Endothelial cell of umbilical vein (primary cell): ENCODE measurements at regions of chr11 and their contacts with region 1.

Region 1: DNA sequence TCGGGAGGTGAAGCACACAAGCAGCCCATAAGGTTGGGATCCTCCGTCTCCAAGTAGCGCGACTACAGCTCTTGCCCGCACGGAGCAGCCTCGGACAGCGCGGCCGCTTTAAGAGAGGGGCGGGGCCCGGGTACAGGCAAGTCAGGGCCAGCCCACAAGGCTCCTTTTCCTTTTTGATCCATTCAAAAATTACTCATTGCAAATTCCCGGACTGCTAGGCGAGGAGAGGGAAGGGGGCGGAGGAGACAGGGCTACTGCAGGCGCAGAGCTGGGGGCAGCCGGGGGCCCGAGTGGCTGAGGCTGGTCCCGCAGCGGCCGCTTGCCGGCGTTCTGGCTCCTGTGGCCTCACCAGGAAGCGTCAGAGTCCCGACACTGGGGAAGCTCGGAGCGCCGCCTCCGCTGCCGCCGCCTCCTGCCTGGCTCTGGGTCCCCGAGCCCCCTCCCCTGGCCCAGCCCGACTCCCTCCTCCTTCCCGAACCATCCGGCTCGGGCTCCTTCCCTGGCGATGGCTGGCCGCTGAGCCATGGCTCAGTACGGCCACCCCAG is at the start of gene UBASH3B:
- DNase-seq: peak; percentile 90
- H3K4me3 ChIP-seq: peak within 1 kb of the TSS; percentile 47 to 74 (median 62)
- H3K27ac ChIP-seq: peak within 1 kb of the TSS; percentile 83
- H3K4me1 ChIP-seq: peaks cover 17% of the 10 kb centered on the region
- H3K27me3 ChIP-seq: no peaks in the 10 kb centered on the region
- CTCF ChIP-seq: no peak
- POLR2A ChIP-seq: peak; percentile 96
- total RNA-seq, gene UBASH3B: 38.1 and 38.8 TPM in 2 replicates

Region 2: DNA sequence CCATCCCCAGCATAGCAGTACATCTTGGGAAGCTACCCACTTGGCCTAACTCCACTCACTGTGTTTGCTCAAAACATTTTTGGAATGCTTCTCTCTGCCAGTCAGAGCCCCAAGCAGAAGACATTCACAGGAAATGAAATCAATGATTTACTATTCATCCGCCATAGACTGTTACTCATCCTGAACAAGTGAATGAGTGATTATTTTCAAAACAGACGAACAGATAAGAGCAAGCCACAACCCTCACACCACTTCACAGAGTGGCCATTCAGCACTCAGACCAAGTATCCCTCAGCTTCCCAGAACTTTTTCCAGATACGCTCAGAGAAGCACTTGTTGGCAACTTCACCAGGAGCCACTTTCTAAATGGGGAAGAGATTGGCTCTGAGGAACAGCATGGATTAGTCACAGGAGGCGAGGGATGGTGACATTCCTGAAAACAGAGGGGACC is 13.1 kb before region 1 on chr11:
- CTCF ChIA-PET with region 1: interaction called, 12 read pairs
- POLR2A ChIA-PET with region 1: interaction called, 3 read pairs
- dilution Hi-C with region 1: no loop called
- intact Hi-C with region 1: loop called (anchors 1 kb)
- DNase-seq: peak; percentile 60
- H3K4me3 ChIP-seq: no peak overlapping the region
- H3K27ac ChIP-seq: peak overlapping the region; percentile 69
- H3K4me1 ChIP-seq: peaks cover 26% of the 10 kb centered on the region
- H3K27me3 ChIP-seq: no peaks in the 10 kb centered on the region
- CTCF ChIP-seq: no peak
- POLR2A ChIP-seq: peak; percentile 25

Region 3: GRCh38 chr11:122668562-122669090 is 13.0 kb after region 1 on chr11:
- CTCF ChIA-PET with region 1: interaction called, 11 read pairs
- POLR2A ChIA-PET with region 1: no interaction called
- dilution Hi-C with region 1: no loop called
- intact Hi-C with region 1: no loop called
- DNase-seq: peak; percentile 20
- H3K4me3 ChIP-seq: no peak overlapping the region
- H3K27ac ChIP-seq: no peak overlapping the region
- H3K4me1 ChIP-seq: peaks cover 6% of the 10 kb centered on the region
- H3K27me3 ChIP-seq: no peaks in the 10 kb centered on the region
- CTCF ChIP-seq: no peak
- POLR2A ChIP-seq: no peak

Region 4: DNA sequence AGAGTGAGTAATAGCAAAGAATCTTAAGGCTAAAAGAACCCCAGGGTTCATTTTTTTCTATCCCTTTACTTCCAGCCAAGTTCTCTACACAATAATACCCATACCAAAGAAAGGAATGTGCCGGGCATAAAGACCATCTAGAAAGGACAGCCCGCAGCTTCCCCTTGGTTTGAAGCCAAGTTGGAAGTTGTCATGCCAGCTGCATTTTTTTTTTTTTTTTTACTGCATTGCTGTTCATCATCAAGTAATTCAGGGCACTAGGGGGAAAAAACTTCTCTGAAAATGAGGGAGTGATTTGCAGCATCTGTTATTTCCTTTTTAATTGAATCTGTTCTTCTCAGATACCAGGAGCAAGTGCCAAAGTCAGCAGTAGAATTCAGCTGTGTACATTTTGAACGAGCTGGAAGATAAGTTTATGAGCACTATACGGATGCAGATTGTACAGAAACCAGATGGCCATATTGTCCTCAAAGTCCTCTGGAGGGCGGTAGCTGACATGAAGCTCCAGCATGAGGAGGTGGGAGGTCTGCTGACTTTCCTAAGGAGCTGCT is 56.3 kb after region 1 on chr11:
- CTCF ChIA-PET with region 1: interaction called, 26 read pairs
- POLR2A ChIA-PET with region 1: interaction called, 5 read pairs
- dilution Hi-C with region 1: no loop called
- intact Hi-C with region 1: loop called (anchors 1 kb)
- DNase-seq: peak; percentile 98
- H3K4me3 ChIP-seq: no peak overlapping the region
- H3K27ac ChIP-seq: peak overlapping the region; percentile 48
- H3K4me1 ChIP-seq: peaks cover 35% of the 10 kb centered on the region
- H3K27me3 ChIP-seq: no peaks in the 10 kb centered on the region
- CTCF ChIP-seq: peak; percentile 37 to 42
- POLR2A ChIP-seq: peak; percentile 61

Region 5: DNA sequence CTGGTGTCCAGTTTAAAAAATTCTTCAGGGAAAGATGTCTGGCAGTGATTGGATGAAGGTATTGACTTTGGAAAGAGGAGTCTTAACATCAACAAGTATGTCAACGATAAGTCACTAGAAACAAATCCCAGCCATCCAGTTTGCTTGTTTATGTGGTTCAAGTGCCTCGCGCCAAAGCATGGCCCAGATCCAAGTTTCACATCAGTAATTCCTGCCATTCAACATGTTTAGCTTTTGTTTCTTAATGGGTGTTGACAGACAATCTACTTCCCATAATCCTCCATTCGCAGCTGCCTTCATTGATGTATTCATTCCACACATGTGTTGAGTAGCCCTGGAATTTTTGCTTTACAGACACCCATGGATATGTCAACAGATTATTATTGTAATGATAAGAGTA is 77.7 kb after region 1 on chr11:
- CTCF ChIA-PET with region 1: interaction called, 4 read pairs
- POLR2A ChIA-PET with region 1: no interaction called
- dilution Hi-C with region 1: no loop called
- intact Hi-C with region 1: loop called (anchors 2 kb)
- DNase-seq: peak; percentile 99
- H3K4me3 ChIP-seq: no peak overlapping the region
- H3K27ac ChIP-seq: peak overlapping the region; percentile 69
- H3K4me1 ChIP-seq: peaks cover 59% of the 10 kb centered on the region
- H3K27me3 ChIP-seq: no peaks in the 10 kb centered on the region
- CTCF ChIP-seq: no peak
- POLR2A ChIP-seq: peak; percentile 20

Region 6: DNA sequence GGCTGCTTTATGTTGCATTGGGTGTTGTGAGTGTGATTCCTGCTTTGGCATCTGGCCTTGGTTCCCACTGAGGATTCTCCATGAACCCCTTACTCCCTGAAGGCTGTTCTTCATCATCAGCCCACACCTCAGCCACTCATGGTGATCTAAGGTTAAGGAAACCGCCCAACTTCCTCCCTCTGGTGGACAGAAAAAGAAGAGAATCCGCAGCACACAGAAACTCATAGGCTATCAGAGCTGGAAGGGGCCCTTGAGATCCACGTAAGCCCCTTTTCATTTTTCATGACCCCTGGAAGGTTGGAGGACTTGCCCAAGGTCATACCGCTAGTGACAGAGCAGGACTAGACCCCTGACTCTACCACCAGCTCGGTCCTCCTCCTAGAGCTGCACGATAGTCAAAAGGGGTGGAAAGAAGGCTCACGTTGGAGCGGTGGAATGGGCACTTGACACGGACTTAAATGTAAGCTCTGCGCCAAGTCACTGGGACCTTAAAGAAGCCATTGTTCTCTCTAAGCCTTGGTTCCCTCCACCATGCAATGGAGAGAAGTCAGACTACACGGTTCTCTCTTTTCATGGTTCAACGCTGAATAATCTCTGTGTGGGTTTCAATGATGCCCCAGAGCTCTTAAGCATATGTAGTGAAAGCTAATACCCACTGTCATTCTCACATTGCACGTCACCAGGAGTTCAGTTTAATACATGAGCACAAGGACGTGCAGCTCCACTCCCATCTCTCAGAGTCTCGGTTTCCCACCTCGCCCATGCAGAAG is 99.1 kb after region 1 on chr11:
- CTCF ChIA-PET with region 1: interaction called, 15 read pairs
- POLR2A ChIA-PET with region 1: no interaction called
- dilution Hi-C with region 1: no loop called
- intact Hi-C with region 1: loop called (anchors 1 kb)
- DNase-seq: no peak
- H3K4me3 ChIP-seq: no peak overlapping the region
- H3K27ac ChIP-seq: no peak overlapping the region
- H3K4me1 ChIP-seq: peaks cover 33% of the 10 kb centered on the region
- H3K27me3 ChIP-seq: no peaks in the 10 kb centered on the region
- CTCF ChIP-seq: peak; percentile 36 to 37
- POLR2A ChIP-seq: no peak

Region 7: DNA sequence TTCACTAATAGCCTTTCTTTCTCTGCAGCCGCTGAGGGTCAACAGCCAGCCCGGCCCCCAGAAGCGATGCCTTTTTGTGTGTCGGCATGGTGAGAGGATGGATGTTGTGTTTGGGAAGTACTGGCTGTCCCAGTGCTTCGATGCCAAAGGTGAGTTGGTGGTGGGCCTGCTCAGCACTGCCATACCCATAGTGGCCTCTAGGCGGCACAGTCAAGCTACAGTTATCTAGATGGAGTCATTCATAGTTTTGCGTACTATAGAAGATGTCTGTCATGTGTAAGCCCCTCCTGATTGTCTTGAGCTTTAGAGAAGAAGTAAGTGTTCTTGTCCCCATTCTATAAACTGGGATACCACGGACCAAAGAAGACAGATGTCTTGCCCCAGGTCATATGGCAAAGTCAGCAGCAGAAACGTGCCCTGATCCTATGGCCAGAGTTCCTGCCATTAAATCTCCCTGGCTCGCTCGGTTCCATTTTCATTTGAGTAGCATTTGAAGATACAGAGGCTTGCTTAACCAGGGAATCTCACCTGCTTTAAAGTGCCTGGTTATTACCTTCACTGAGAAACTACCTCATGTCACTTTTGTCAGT is 140.6 kb after region 1 on chr11:
- CTCF ChIA-PET with region 1: interaction called, 11 read pairs
- POLR2A ChIA-PET with region 1: no interaction called
- dilution Hi-C with region 1: no loop called
- intact Hi-C with region 1: no loop called
- DNase-seq: peak; percentile 42
- H3K4me3 ChIP-seq: no peak overlapping the region
- H3K27ac ChIP-seq: no peak overlapping the region
- H3K4me1 ChIP-seq: peaks cover 7% of the 10 kb centered on the region
- H3K27me3 ChIP-seq: no peaks in the 10 kb centered on the region
- CTCF ChIP-seq: peak; percentile 78 to 81
- POLR2A ChIP-seq: no peak

Region 8: GRCh38 chr11:122910775-122911174 is 255.2 kb after region 1 on chr11:
- CTCF ChIA-PET with region 1: no interaction called
- POLR2A ChIA-PET with region 1: no interaction called
- dilution Hi-C with region 1: no loop called
- intact Hi-C with region 1: no loop called
- DNase-seq: peak; percentile 36
- H3K4me3 ChIP-seq: no peak overlapping the region
- H3K27ac ChIP-seq: no peak overlapping the region
- H3K4me1 ChIP-seq: peaks cover 3% of the 10 kb centered on the region
- H3K27me3 ChIP-seq: no peaks in the 10 kb centered on the region
- CTCF ChIP-seq: peak in 1 of 2 donors; percentile 8
- POLR2A ChIP-seq: no peak